ENCODE measurements at regions of chr10 and their contacts with region 1.

Region 1: GRCh38 chr10:110803830-110804338 is 67.8 kb upstream of the PDCD4 start:
- DNase-seq: peak; percentile 29
- ATAC-seq: peak; percentile 70
- H3K4me3 Mint-ChIP-seq: no peak overlapping the region
- H3K27ac Mint-ChIP-seq: peak overlapping the region; percentile 54
- H3K4me1 Mint-ChIP-seq: peaks cover 26% of the 10 kb centered on the region
- H3K27me3 Mint-ChIP-seq: no peaks in the 10 kb centered on the region
- CTCF ChIP-seq: no peak

Region 2: GRCh38 chr10:110746254-110746826 is 57.5 kb before region 1 on chr10:
- CTCF ChIA-PET with region 1: interaction called, 12 read pairs
- POLR2A ChIA-PET with region 1: no interaction called
- intact Hi-C with region 1: loop called (anchors 1 kb)
- DNase-seq: peak; percentile 39
- ATAC-seq: peak; percentile 75
- H3K4me3 Mint-ChIP-seq: no peak overlapping the region
- H3K27ac Mint-ChIP-seq: no peak overlapping the region
- H3K4me1 Mint-ChIP-seq: peaks cover 7% of the 10 kb centered on the region
- H3K27me3 Mint-ChIP-seq: peaks cover 5% of the 10 kb centered on the region
- CTCF ChIP-seq: peak; percentile 40

Region 3: DNA sequence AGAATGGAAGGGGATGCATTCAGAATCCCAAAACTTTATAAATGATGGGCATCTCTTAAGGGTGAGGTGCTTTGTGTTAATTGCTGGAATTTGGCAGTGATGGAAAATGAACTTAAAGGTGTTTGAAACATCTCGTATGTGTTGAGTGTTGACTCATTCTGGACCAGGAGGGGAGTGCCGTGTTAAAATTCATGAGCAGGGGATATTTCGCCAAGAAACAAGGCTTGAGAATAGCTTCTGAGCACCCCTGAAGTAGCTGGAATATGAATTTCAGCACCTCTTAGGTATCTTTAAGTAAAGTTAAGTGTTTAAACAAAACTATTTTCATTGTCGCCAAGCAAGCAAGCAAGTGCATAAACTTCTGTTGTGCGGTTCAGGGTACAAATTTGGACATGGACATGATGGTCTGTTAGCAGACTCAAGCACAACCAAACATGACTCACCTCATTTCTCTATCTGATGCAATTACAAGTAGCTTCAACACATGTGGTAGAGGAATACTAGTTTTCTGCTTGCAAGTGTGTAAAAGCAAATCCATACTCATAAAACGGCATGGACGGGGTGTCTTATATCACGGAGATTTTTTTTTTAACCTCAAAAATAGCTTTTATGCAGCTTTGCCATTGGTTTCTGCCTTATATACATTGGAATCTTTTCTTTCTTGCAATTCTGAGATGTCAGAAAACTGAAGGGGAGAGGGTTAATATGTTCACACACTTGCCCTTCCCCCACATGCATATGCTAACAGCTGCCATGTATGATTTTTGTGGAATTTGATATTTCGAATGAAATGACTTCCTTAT is 38.5 kb before region 1 on chr10:
- CTCF ChIA-PET with region 1: no interaction called
- POLR2A ChIA-PET with region 1: no interaction called
- intact Hi-C with region 1: no loop called
- DNase-seq: no peak
- ATAC-seq: no peak
- H3K4me3 Mint-ChIP-seq: no peak overlapping the region
- H3K27ac Mint-ChIP-seq: no peak overlapping the region
- H3K4me1 Mint-ChIP-seq: no peaks in the 10 kb centered on the region
- H3K27me3 Mint-ChIP-seq: peaks cover 12% of the 10 kb centered on the region
- CTCF ChIP-seq: no peak

Region 4: GRCh38 chr10:110864662-110865140 is 60.8 kb after region 1 on chr10:
- CTCF ChIA-PET with region 1: interaction called, 12 read pairs
- POLR2A ChIA-PET with region 1: interaction called, 16 read pairs
- intact Hi-C with region 1: no loop called
- DNase-seq: no peak
- ATAC-seq: peak; percentile 50
- H3K4me3 Mint-ChIP-seq: peak overlapping the region; percentile 79
- H3K27ac Mint-ChIP-seq: peak overlapping the region; percentile 97
- H3K4me1 Mint-ChIP-seq: peaks cover 98% of the 10 kb centered on the region
- H3K27me3 Mint-ChIP-seq: no peaks in the 10 kb centered on the region
- CTCF ChIP-seq: no peak

Region 5: DNA sequence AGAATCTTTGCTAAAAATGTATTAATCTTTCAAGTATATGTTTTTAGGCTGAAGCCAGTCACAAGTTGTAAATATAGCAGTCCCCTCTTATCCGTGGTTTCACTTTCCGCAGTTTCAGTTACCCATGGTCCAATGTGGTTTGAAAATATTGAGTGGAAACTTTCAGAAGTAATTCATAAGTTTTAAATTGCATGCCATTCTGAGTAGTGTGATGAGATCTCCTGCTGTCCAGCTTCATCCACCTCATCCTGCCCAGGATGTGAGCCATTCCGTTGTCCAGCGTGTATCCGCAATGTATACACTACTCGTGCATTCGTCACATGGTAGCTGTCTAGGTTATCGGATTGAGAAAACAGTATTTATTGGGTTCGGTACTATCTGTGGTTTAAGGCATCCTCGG is 80.0 kb after region 1 on chr10:
- CTCF ChIA-PET with region 1: interaction called, 10 read pairs
- POLR2A ChIA-PET with region 1: no interaction called
- intact Hi-C with region 1: no loop called
- DNase-seq: no peak
- ATAC-seq: no peak
- H3K4me3 Mint-ChIP-seq: no peak overlapping the region
- H3K27ac Mint-ChIP-seq: peak overlapping the region; percentile 79
- H3K4me1 Mint-ChIP-seq: peaks cover 39% of the 10 kb centered on the region
- H3K27me3 Mint-ChIP-seq: no peaks in the 10 kb centered on the region
- CTCF ChIP-seq: no peak

Region 6: GRCh38 chr10:111018021-111018420 is 214.1 kb after region 1 on chr10:
- CTCF ChIA-PET with region 1: no interaction called
- POLR2A ChIA-PET with region 1: no interaction called
- intact Hi-C with region 1: loop called (anchors 10 kb)
- DNase-seq: no peak
- ATAC-seq: no peak
- H3K4me3 Mint-ChIP-seq: no peak overlapping the region
- H3K27ac Mint-ChIP-seq: no peak overlapping the region
- H3K4me1 Mint-ChIP-seq: no peaks in the 10 kb centered on the region
- H3K27me3 Mint-ChIP-seq: no peaks in the 10 kb centered on the region
- CTCF ChIP-seq: no peak

Measured in activated B cell treated with CpG ODN at 0.5 μM for 24 hours (primary cell).